HEK293 (cell line): ENCODE measurements at regions of chr6 and their contacts with region 1.

Region 1: GRCh38 chr6:44431118-44431725 is 43.7 kb downstream of the CDC5L start:
- H3K4me3 ChIP-seq: no peak overlapping the region
- H3K27ac ChIP-seq: no peak overlapping the region
- H3K4me1 ChIP-seq: peaks cover 22% of the 10 kb centered on the region
- CTCF ChIP-seq: peak; percentile 55; the same call in 1 of the 2 replicates

Region 2: GRCh38 chr6:44407951-44408670 is 23.1 kb before region 1 on chr6:
- CTCF ChIA-PET with region 1: interaction called, 13 read pairs
- POLR2A ChIA-PET with region 1: no interaction called
- H3K4me3 ChIP-seq: no peak overlapping the region
- H3K27ac ChIP-seq: no peak overlapping the region
- H3K4me1 ChIP-seq: no peaks in the 10 kb centered on the region
- CTCF ChIP-seq: no peak

Region 3: GRCh38 chr6:44446628-44447306 is 15.5 kb after region 1 on chr6:
- CTCF ChIA-PET with region 1: interaction called, 92 read pairs
- POLR2A ChIA-PET with region 1: no interaction called
- H3K4me3 ChIP-seq: no peak overlapping the region
- H3K27ac ChIP-seq: no peak overlapping the region
- H3K4me1 ChIP-seq: peaks cover 31% of the 10 kb centered on the region
- CTCF ChIP-seq: no peak

Region 4: GRCh38 chr6:44456070-44456965 is 25.1 kb after region 1 on chr6:
- CTCF ChIA-PET with region 1: interaction called, 302 read pairs
- POLR2A ChIA-PET with region 1: interaction called, 3 read pairs
- H3K4me3 ChIP-seq: peak overlapping the region; percentile 24
- H3K27ac ChIP-seq: no peak overlapping the region; the same call in 1 of the 2 replicates
- H3K4me1 ChIP-seq: peaks cover 12% of the 10 kb centered on the region
- CTCF ChIP-seq: peak; percentile 77

Region 5: DNA sequence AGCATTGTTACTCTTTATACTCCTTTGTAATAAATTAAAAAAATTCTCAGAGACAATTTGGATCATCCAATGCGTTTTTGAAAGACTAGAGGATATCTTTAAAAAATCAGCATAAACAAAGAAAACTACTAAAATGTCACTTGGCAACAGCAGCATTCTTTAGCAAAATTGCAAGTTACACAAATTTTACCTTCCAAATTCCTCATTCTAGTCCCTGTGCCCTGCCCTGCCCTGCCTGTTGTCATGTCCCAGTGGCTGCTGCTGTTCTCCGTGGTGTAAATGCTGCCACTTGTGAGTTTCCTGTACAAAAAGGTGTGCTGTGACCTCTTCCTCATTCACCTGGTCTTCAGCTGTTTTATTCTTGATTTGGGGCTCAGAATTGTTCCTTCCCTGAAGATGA is 39.5 kb after region 1 on chr6:
- CTCF ChIA-PET with region 1: interaction called, 302 read pairs
- POLR2A ChIA-PET with region 1: no interaction called
- H3K4me3 ChIP-seq: no peak overlapping the region
- H3K27ac ChIP-seq: no peak overlapping the region
- H3K4me1 ChIP-seq: no peaks in the 10 kb centered on the region
- CTCF ChIP-seq: no peak